ENCODE measurements at regions of chr14 and their contacts with region 1.

Region 1: GRCh38 chr14:73503648-73504047 is 12.9 kb downstream of the RIOX1 start:
- DNase-seq: no peak
- ATAC-seq: no peak

Region 2: GRCh38 chr14:72633551-72633950 is 870.1 kb before region 1 on chr14:
- intact Hi-C with region 1: no loop called
- DNase-seq: no peak
- ATAC-seq: no peak

Region 3: DNA sequence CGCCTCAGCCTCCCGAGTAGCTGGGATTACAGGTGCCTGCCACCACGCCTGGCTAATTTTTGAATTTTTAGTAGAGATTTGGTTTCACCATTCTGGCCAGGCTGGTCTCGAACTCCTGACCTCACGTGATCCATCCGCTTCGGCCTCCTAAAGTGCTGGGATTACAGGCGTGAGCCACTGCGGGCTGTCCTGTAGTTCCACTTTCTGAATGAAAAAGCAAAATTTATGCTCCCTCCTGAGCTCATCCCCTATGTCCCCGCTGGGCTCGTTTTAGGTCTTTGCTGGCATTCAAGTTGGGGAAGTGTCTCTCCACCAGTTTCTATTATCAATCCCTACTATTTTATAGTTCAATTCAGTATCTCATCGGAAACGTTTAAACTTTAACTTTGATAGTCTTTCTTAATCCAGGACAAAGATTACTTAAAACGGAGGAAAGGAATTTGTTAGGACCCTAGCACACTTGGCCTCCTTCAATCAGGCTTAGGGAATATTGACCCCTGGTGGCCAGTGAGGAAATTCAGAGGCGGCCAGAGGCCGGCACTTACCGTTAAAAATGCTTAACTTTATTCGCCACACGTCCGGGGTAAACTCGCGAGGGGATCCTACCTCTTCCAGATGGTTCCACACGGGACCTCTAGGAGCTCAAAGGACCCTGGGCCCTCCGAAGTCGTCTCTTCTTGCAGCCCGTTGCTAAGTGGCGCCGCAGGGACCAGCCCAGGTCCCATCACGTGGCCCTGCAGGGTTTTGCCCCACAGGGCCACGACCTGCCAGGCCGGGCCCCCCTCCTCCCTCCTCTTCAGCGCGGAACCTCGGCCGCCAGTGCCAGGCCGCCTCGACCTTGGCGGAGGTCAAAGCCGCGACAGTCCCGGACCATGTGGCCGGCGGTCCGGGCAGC is 129.7 kb after region 1 on chr14:
- intact Hi-C with region 1: loop called (anchors 5 kb)
- DNase-seq: peak; percentile 76
- ATAC-seq: peak; percentile 93